Left ventricle myocardium inferior (tissue), 1 donor: ENCODE measurements at regions of chrX and their contacts with region 1.

Region 1: DNA sequence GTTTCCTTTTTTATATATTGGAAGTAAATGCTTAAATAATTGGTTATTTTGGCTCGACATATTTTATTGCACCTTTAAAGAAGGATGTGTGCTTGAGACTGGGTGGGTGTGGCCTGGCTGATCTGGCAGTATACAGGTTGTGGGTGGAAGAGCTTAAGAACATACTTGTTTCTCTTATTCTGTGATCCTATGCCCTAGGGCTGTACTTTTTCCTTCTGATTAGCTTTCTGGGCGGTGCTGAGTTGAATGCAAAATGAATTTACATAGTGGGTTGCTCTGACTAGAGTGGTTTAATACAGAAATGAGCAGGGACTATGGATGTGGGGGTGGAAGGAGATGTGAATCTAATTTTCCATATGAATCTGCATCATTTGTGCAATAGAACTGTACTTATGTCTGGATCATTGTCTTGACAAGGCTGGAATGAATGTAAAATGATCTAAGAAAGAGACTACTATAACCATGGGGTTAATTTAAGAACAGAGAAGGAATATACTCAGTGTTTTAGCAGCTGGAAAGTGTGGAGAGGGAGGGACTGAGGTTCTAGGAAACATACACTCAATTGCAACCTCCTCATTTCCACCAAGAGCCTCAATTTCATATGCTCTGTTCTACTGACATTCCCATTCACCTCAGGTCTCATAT is 73.7 kb downstream of the RLIM start:
- DNase-seq: no peak
- H3K4me3 ChIP-seq: no peak overlapping the region
- H3K27ac ChIP-seq: no peak overlapping the region
- H3K4me1 ChIP-seq: peaks cover 11% of the 10 kb centered on the region
- H3K27me3 ChIP-seq: no peaks in the 10 kb centered on the region
- CTCF ChIP-seq: no peak

Region 2: DNA sequence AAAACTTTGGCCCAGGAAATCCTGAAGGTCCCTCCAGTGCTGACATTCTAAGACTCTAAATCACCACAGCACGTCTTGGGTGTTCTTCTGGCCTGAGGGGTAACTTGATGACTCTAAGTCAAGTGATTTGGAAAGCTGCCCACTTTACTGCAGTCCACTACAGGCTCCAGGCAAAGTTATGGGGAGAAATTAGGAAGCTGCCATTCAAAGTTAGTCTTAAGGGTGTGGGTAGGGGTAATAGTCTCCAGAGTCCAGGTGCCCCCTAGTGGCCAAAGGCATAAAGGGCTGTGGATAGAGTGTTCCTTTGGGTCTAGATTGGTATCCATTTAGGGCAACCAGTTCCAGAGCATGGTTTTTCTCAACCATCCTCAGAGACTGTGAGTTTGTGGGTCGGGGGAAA is 158.1 kb before region 1 on chrX:
- intact Hi-C with region 1: loop called (anchors 10 kb)
- DNase-seq: peak; percentile 31
- H3K4me3 ChIP-seq: no peak overlapping the region
- H3K27ac ChIP-seq: no peak overlapping the region
- H3K4me1 ChIP-seq: no peaks in the 10 kb centered on the region
- H3K27me3 ChIP-seq: no peaks in the 10 kb centered on the region
- CTCF ChIP-seq: peak; percentile 73

Region 3: GRCh38 chrX:74636749-74637314 is 96.1 kb after region 1 on chrX:
- intact Hi-C with region 1: no loop called
- DNase-seq: no peak
- H3K4me3 ChIP-seq: no peak overlapping the region
- H3K27ac ChIP-seq: no peak overlapping the region
- H3K4me1 ChIP-seq: no peaks in the 10 kb centered on the region
- H3K27me3 ChIP-seq: no peaks in the 10 kb centered on the region
- CTCF ChIP-seq: no peak